SK-N-SH (cell line): ENCODE measurements at regions of chr21 and their contacts with region 1.

Region 1: DNA sequence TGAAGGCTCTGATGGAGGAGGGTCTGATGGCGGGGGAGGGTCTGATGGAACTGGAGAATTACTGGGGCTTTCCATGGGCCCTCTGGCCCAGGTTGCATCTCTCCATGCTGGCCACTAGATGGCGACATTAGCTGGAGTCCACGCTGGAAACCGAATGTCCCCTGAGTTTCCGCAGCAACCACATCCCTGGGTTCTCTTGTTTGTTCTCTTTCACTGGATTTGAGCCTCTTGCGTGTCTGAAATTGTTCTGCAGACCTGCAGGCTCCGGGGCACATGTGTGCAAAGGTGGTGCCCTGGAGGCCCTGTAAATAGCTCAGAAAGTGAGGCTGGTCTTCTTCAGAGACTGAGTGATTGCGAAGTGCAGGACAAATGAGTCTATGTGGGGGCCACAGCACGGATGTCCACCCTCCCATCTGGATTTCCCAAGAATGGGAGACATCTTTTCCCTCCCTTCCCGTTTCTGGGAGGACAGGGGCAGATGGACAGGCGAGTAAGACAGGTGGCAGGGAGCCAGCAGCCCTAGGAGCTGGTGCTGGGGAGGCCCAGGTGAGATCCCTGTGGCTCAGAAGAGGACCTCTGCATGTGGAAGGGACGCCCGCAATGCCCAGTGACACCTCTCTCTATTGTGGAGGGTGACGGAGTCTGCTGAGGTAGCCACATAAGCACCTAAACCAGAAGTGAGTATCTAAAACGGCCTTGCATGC is 73.2 kb upstream of the ABCG1 start:
- DNase-seq: peak; percentile 92
- H3K4me3 ChIP-seq: peak overlapping the region in 1 of 2 experiments; percentile 9; a peak in 1 of 4 replicates
- H3K27ac ChIP-seq: no peak overlapping the region
- H3K4me1 ChIP-seq: peaks cover 0 to 5% of the 10 kb centered on the region in 2 experiments; a peak in 1 of 4 replicates
- H3K27me3 ChIP-seq: no peaks in the 10 kb centered on the region
- CTCF ChIP-seq: peak; percentile 88
- EP300 ChIP-seq: no peak
- RAD21 ChIP-seq: peak; percentile 97

Region 2: GRCh38 chr21:40244981-40245380 is 1900.7 kb before region 1 on chr21:
- CTCF ChIA-PET with region 1: no interaction called
- POLR2A ChIA-PET with region 1: no interaction called
- DNase-seq: no peak
- H3K4me3 ChIP-seq: no peak overlapping the region
- H3K27ac ChIP-seq: no peak overlapping the region
- H3K4me1 ChIP-seq: no peaks in the 10 kb centered on the region; a peak in 1 of 4 replicates
- H3K27me3 ChIP-seq: no peaks in the 10 kb centered on the region
- CTCF ChIP-seq: no peak
- EP300 ChIP-seq: no peak
- RAD21 ChIP-seq: no peak

Region 3: GRCh38 chr21:41953831-41954653 is 191.7 kb before region 1 on chr21 and contains the start of gene C2CD2:
- CTCF ChIA-PET with region 1: no interaction called
- POLR2A ChIA-PET with region 1: no interaction called
- DNase-seq: peak; percentile 91
- H3K4me3 ChIP-seq: peak within 1 kb of the TSS; percentile 62 to 67
- H3K27ac ChIP-seq: peak within 1 kb of the TSS in 1 of 2 experiments; percentile 23; a peak in 2 of 4 replicates
- H3K4me1 ChIP-seq: peaks cover 17 to 32% of the 10 kb centered on the region in 2 experiments; a peak in 3 of 4 replicates
- H3K27me3 ChIP-seq: no peaks in the 10 kb centered on the region
- CTCF ChIP-seq: 0 out of 2 replicates have a peak, but pooled peaks have one; percentile 10
- EP300 ChIP-seq: no peak
- RAD21 ChIP-seq: no peak
- polyA plus RNA-seq, gene C2CD2: 9.7 and 15.0 TPM in 2 replicates

Region 4: GRCh38 chr21:42156690-42157577 is 11.2 kb after region 1 on chr21:
- CTCF ChIA-PET with region 1: interaction called, 52 read pairs
- POLR2A ChIA-PET with region 1: no interaction called
- DNase-seq: peak; percentile 78
- H3K4me3 ChIP-seq: no peak overlapping the region
- H3K27ac ChIP-seq: peak overlapping the region in 1 of 2 experiments; percentile 78; a peak in 2 of 4 replicates
- H3K4me1 ChIP-seq: peaks cover 0 to 22% of the 10 kb centered on the region in 2 experiments; a peak in 2 of 4 replicates
- H3K27me3 ChIP-seq: peaks cover 5% of the 10 kb centered on the region; the same call in 1 of the 2 replicates
- CTCF ChIP-seq: no peak
- EP300 ChIP-seq: peak in 1 of 2 experiments; percentile 42; a peak in 1 of 4 replicates
- RAD21 ChIP-seq: no peak

Region 5: GRCh38 chr21:42220138-42220701 is 74.5 kb after region 1 on chr21:
- CTCF ChIA-PET with region 1: interaction called, 17 read pairs
- POLR2A ChIA-PET with region 1: interaction called, 3 read pairs
- DNase-seq: peak; percentile 79
- H3K4me3 ChIP-seq: peak overlapping the region; percentile 55 to 58; a peak in 3 of 4 replicates
- H3K27ac ChIP-seq: peak overlapping the region in 1 of 2 experiments; percentile 79; a peak in 2 of 4 replicates
- H3K4me1 ChIP-seq: peaks cover 0 to 34% of the 10 kb centered on the region in 2 experiments; a peak in 2 of 4 replicates
- H3K27me3 ChIP-seq: peaks cover 11% of the 10 kb centered on the region; the same call in 1 of the 2 replicates
- CTCF ChIP-seq: no peak
- EP300 ChIP-seq: no peak
- RAD21 ChIP-seq: no peak

Region 6: DNA sequence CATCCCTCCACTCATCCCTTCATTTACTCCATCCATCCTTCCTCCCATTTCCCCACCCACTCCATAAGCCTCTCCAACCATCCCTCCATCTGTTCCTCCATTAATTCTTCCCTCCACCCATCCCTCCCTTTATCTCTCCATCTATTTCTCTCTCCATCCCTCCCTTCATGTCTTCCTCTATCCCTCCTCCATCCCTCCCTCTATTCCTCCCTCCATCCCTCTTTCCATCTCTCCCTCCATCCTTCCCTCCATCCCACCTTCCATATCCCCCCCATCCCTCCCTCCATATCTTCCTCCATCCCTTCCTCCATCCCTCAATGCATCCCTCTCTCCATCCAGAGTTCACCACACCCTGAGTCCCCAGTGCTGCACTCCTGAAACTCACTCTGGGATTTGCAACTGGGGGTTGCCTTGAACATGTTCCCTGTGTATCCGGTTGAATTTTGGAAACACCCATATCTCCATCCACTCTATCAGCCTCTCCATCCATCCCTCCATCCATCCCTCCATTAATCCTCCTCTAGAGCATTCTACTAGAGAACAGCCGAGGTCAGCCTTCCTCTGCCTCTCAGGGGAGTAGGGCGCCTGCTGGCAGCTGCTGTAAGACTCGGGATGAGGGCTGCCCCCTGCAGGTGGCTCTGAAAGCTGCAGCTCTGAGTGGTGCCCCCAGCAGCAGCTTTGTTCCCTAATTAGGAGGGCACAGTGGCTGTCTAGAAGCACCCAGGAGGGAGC is 112.6 kb after region 1 on chr21:
- CTCF ChIA-PET with region 1: interaction called, 48 read pairs
- POLR2A ChIA-PET with region 1: no interaction called
- DNase-seq: peak; percentile 83
- H3K4me3 ChIP-seq: no peak overlapping the region
- H3K27ac ChIP-seq: peak overlapping the region in 1 of 2 experiments; percentile 71; a peak in 1 of 4 replicates
- H3K4me1 ChIP-seq: peaks cover 0 to 45% of the 10 kb centered on the region in 2 experiments; a peak in 1 of 4 replicates
- H3K27me3 ChIP-seq: no peaks in the 10 kb centered on the region
- CTCF ChIP-seq: peak; percentile 62
- EP300 ChIP-seq: no peak
- RAD21 ChIP-seq: peak; percentile 65

Region 7: GRCh38 chr21:42309753-42310221 is 164.1 kb after region 1 on chr21:
- CTCF ChIA-PET with region 1: interaction called, 13 read pairs
- POLR2A ChIA-PET with region 1: no interaction called
- DNase-seq: peak; percentile 87
- H3K4me3 ChIP-seq: no peak overlapping the region
- H3K27ac ChIP-seq: no peak overlapping the region
- H3K4me1 ChIP-seq: peaks cover 0 to 7% of the 10 kb centered on the region in 2 experiments; a peak in 1 of 4 replicates
- H3K27me3 ChIP-seq: no peaks in the 10 kb centered on the region
- CTCF ChIP-seq: peak; percentile 62
- EP300 ChIP-seq: no peak
- RAD21 ChIP-seq: peak; percentile 64

Region 8: GRCh38 chr21:42537106-42537742 is 391.5 kb after region 1 on chr21:
- CTCF ChIA-PET with region 1: interaction called, 11 read pairs
- POLR2A ChIA-PET with region 1: no interaction called
- DNase-seq: no peak
- H3K4me3 ChIP-seq: no peak overlapping the region
- H3K27ac ChIP-seq: no peak overlapping the region
- H3K4me1 ChIP-seq: peaks cover 0 to 26% of the 10 kb centered on the region in 2 experiments; a peak in 1 of 4 replicates
- H3K27me3 ChIP-seq: no peaks in the 10 kb centered on the region
- CTCF ChIP-seq: peak; percentile 43
- EP300 ChIP-seq: no peak
- RAD21 ChIP-seq: peak; percentile 68